ENCODE measurements at regions of chr17 and their contacts with region 1.

Region 1: DNA sequence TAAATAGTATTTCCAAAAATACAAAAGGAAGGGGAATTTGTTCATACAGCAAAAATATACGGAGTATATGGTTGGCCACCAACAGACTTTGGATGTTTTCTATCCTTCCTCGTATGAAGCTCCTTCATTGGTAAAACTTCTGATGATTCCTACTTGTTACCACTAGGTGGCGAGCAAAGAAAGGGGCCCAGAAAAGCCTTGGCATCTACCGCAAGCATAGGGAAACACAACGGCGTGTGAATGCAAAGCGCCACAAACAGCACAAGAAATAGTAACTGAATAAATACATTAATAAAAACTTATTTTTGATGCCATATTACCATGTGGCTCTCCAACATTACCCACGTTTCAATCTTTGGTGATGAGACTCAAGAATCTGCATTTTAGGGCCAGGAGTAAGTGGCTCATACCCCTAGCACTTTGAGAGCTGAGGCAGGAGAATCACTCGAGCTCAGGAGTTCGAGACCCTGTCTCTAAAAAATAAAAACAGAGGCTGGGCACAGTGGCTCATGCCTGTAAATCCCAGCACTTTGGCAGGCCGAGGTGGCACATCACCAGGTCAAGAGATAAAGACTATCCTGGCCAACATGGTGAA is 34.5 kb downstream of the YWHAE start:
- DNase-seq: peak; percentile 20
- H3K4me3 ChIP-seq: no peak overlapping the region
- H3K27me3 ChIP-seq: no peaks in the 10 kb centered on the region
- CTCF ChIP-seq: peak; percentile 86

Region 2: DNA sequence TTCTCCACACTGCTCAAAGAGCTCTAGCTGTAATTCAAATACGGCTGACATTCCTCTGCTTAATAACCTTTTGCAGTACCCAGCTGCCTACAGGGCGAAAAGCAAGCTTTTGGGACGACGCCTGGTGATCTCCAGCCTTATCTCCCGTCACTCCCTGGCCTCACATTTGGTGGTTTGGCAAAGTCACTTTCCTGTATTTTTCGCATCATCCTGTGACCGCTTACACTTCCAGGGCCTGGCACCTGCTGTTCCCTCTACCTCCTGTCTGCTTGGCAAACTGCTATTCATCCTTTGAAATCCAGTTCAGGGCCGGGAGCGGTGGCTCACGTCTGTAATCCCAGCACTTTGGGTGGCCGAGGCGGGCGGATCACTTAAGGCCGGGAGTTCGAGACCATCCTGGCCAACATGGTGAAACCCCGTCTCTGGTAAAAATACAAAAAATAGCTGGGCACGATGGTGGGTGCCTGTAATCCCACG is 98.0 kb before region 1 on chr17:
- CTCF ChIA-PET with region 1: no interaction called
- POLR2A ChIA-PET with region 1: no interaction called
- DNase-seq: no peak
- H3K4me3 ChIP-seq: peak overlapping the region; percentile 78
- H3K27me3 ChIP-seq: peaks cover 7% of the 10 kb centered on the region
- CTCF ChIP-seq: no peak

Region 3: GRCh38 chr17:1323336-1323735 is 42.2 kb before region 1 on chr17:
- CTCF ChIA-PET with region 1: no interaction called
- POLR2A ChIA-PET with region 1: no interaction called
- DNase-seq: no peak
- H3K4me3 ChIP-seq: no peak overlapping the region
- H3K27me3 ChIP-seq: peaks cover 2% of the 10 kb centered on the region; the same call in 1 of the 2 replicates
- CTCF ChIP-seq: no peak

Region 4: DNA sequence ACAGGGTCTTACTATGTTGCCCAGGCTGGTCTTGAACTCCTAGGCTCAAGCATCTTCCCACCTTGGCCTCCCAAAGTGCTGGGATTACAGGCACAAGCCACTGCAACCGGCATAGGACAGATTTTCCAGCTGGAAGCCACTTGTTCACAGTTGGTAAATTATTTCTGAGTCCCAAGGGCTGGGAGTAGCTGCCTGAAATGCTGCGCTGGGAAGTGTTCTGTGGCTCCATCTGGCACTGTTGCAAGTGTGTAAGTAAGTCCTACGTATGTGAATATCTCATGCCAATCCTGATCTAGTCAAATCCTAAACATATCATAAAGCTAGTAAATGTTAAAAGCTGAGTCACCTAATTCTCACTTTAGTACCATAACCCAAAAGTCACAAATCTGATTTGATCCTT is 13.6 kb before region 1 on chr17:
- CTCF ChIA-PET with region 1: interaction called, 10 read pairs
- POLR2A ChIA-PET with region 1: no interaction called
- DNase-seq: no peak
- H3K4me3 ChIP-seq: no peak overlapping the region
- H3K27me3 ChIP-seq: no peaks in the 10 kb centered on the region
- CTCF ChIP-seq: no peak

Region 5: GRCh38 chr17:1390433-1391367 is 25.2 kb after region 1 on chr17:
- CTCF ChIA-PET with region 1: interaction called, 17 read pairs
- POLR2A ChIA-PET with region 1: no interaction called
- DNase-seq: no peak
- H3K4me3 ChIP-seq: no peak overlapping the region
- H3K27me3 ChIP-seq: no peaks in the 10 kb centered on the region
- CTCF ChIP-seq: no peak

Region 6: DNA sequence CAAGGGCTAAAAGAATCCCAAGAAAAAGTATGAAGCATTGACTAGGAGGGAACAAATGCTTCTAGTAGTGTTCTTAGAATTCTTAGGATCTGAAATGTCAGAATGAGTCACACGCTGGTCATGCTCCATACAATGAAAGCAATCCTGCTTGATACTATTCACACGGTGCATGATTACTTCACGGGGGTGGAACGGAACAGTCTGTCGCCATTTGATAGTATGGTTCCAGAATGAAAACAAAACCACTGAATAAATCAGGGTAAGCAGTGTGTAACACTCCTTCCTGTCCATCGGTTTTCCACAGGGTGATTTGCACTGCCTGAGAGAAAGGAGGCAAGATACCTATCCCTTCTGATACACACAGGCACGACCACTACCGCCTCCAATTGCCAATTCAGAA is 57.4 kb after region 1 on chr17:
- CTCF ChIA-PET with region 1: interaction called, 15 read pairs
- POLR2A ChIA-PET with region 1: no interaction called
- DNase-seq: peak; percentile 78
- H3K4me3 ChIP-seq: no peak overlapping the region
- H3K27me3 ChIP-seq: no peaks in the 10 kb centered on the region
- CTCF ChIP-seq: no peak

Region 7: GRCh38 chr17:1516388-1517161 is 151.0 kb after region 1 on chr17 and contains the start of gene INPP5K:
- CTCF ChIA-PET with region 1: interaction called, 41 read pairs
- POLR2A ChIA-PET with region 1: interaction called, 3 read pairs
- DNase-seq: peak; percentile 86
- H3K4me3 ChIP-seq: peak within 1 kb of the TSS; percentile 98
- H3K27me3 ChIP-seq: no peaks in the 10 kb centered on the region
- CTCF ChIP-seq: no peak
- polyA plus RNA-seq, gene INPP5K: 43.9 and 45.3 TPM in 2 replicates